ENCODE measurements at regions of chr14 and their contacts with region 1.

Region 1: GRCh38 chr14:22570132-22570949 is 18.7 kb downstream of the DAD1 start:
- DNase-seq: peak in 8 of 9 donors; percentile 72 to 98 (median 96)
- ATAC-seq: peak; percentile 98
- H3K4me3 ChIP-seq: peak overlapping the region; percentile 53
- H3K4me3 Mint-ChIP-seq: peak overlapping the region; percentile 68 to 95 (median 80)
- H3K27ac ChIP-seq: peak overlapping the region; percentile 87
- H3K27ac Mint-ChIP-seq: peak overlapping the region; percentile 77 to 99 (median 96)
- H3K4me1 ChIP-seq: peaks cover 49 to 51% of the 10 kb centered on the region in 2 donors
- H3K4me1 Mint-ChIP-seq: peaks cover 28 to 72% (median 68%) of the 10 kb centered on the region in 7 donors
- H3K27me3 ChIP-seq: no peaks in the 10 kb centered on the region
- H3K27me3 Mint-ChIP-seq: no peaks in the 10 kb centered on the region

Region 2: GRCh38 chr14:21868442-21869046 is 701.8 kb before region 1 on chr14:
- CTCF ChIA-PET with region 1: interaction called, 12 read pairs
- POLR2A ChIA-PET with region 1: interaction called, 6 read pairs
- intact Hi-C with region 1: loop called in 1 of 2 experiments (anchors 1 kb)
- DNase-seq: peak; percentile 33 to 79 (median 70)
- ATAC-seq: peak; percentile 97
- H3K4me3 ChIP-seq: peak overlapping the region; percentile 16
- H3K4me3 Mint-ChIP-seq: peak overlapping the region; percentile 18 to 85 (median 74)
- H3K27ac ChIP-seq: peak overlapping the region; percentile 25
- H3K27ac Mint-ChIP-seq: peak overlapping the region; percentile 8 to 88 (median 59)
- H3K4me1 ChIP-seq: peaks cover 4 to 8% of the 10 kb centered on the region in 2 donors
- H3K4me1 Mint-ChIP-seq: peaks cover 3 to 54% (median 25%) of the 10 kb centered on the region in 7 donors
- H3K27me3 ChIP-seq: peaks cover 0 to 3% of the 10 kb centered on the region in 2 donors
- H3K27me3 Mint-ChIP-seq: peaks cover 0 to 6% (median 0%) of the 10 kb centered on the region in 5 donors

Region 3: DNA sequence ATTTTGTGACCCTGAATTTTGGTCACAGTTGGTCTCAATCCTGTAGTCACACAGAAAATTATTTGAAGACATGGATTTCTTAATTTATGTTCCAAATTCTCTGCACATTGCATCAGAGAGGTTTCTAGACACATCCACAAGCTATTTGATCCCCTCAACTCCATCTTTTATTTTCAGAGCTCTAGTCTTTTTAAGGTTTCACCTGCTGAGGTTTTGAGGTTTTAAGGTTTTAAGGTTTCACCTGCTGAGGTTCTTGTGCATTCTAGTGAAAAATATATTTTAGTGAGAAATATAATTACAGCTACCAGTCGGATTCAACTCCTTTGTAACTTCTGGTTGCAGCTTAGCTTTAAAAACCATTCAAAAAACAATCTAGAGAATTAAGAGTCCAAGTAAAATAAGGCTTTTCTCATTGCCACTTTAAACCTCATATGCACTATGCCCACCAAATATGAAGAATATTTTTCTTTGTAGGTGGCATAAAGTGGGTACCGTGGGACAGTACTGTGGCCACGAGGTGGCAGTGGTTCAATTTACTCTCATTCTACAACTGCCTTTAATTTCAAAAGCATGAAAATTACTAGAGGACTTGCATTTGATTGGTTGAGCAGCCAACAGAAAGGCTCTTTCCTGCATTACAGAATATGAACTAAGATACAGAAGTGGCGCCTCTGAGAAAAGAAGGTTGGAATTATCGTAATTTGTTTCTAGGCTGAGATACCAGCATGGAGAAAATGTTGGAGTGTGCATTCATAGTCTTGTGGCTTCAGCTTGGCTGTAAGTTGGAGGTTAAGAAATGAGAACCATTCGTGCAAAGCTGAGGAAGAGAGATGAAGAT is 530.2 kb before region 1 on chr14:
- CTCF ChIA-PET with region 1: interaction called, 6 read pairs
- POLR2A ChIA-PET with region 1: interaction called, 4 read pairs
- intact Hi-C with region 1: loop called in 1 of 2 experiments (anchors 1 kb)
- DNase-seq: peak in 7 of 9 donors; percentile 46 to 70 (median 59)
- ATAC-seq: peak; percentile 93
- H3K4me3 ChIP-seq: peak overlapping the region; percentile 40
- H3K4me3 Mint-ChIP-seq: peak overlapping the region; percentile 79 to 91 (median 83)
- H3K27ac ChIP-seq: peak overlapping the region; percentile 64
- H3K27ac Mint-ChIP-seq: peak overlapping the region; percentile 80 to 92 (median 88)
- H3K4me1 ChIP-seq: no peaks in the 10 kb centered on the region
- H3K4me1 Mint-ChIP-seq: peaks cover 2 to 34% (median 12%) of the 10 kb centered on the region in 7 donors
- H3K27me3 ChIP-seq: no peaks in the 10 kb centered on the region
- H3K27me3 Mint-ChIP-seq: peaks cover 0 to 8% (median 0%) of the 10 kb centered on the region in 5 donors

Region 4: DNA sequence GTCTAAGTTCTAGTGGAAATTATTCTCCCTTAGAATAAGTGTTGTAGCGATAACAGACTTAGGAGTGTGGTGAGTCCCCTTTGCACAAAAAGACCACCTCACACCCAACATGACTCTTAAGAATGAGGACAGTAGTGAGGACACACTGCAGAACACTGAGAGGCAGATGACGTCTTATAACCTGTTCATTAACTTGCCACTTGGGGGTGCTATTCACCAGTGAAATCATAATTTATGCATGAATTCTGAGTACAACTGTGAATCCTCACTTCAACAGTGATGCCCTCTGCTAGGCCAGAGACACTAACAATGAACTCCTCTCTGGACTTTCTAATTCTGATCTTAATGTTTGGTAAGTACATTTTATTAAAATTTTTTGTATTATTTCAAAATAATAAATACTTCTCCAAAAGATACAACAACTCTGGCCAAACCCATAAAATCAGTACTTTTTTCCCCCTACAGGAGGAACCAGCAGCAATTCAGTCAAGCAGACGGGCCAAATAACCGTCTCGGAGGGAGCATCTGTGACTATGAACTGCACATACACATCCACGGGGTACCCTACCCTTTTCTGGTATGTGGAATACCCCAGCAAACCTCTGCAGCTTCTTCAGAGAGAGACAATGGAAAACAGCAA is 256.0 kb before region 1 on chr14:
- CTCF ChIA-PET with region 1: no interaction called
- POLR2A ChIA-PET with region 1: interaction called, 3 read pairs
- intact Hi-C with region 1: loop called in 1 of 2 experiments (anchors 5 kb)
- DNase-seq: peak in 3 of 9 donors; percentile 4 to 32 (median 19)
- ATAC-seq: peak; percentile 76
- H3K4me3 ChIP-seq: no peak overlapping the region
- H3K4me3 Mint-ChIP-seq: peak overlapping the region in 7 of 10 donors; percentile 42 to 83 (median 60)
- H3K27ac ChIP-seq: no peak overlapping the region
- H3K27ac Mint-ChIP-seq: peak overlapping the region in 5 of 9 donors; percentile 59 to 80 (median 73)
- H3K4me1 ChIP-seq: no peaks in the 10 kb centered on the region
- H3K4me1 Mint-ChIP-seq: peaks cover 0 to 4% (median 0%) of the 10 kb centered on the region in 7 donors
- H3K27me3 ChIP-seq: no peaks in the 10 kb centered on the region
- H3K27me3 Mint-ChIP-seq: no peaks in the 10 kb centered on the region

Region 5: GRCh38 chr14:22598099-22598899 is 28.0 kb after region 1 on chr14 and contains the start of gene ABHD4:
- CTCF ChIA-PET with region 1: interaction called, 15 read pairs
- POLR2A ChIA-PET with region 1: interaction called, 5 read pairs
- intact Hi-C with region 1: no loop called
- DNase-seq: peak; percentile 31 to 79 (median 43)
- ATAC-seq: peak; percentile 93
- H3K4me3 ChIP-seq: peak within 1 kb of the TSS; percentile 88
- H3K4me3 Mint-ChIP-seq: peak within 1 kb of the TSS; percentile 89 to 99 (median 96)
- H3K27ac ChIP-seq: peak within 1 kb of the TSS; percentile 74
- H3K27ac Mint-ChIP-seq: peak within 1 kb of the TSS; percentile 76 to 96 (median 91)
- H3K4me1 ChIP-seq: peaks cover 10 to 15% of the 10 kb centered on the region in 2 donors
- H3K4me1 Mint-ChIP-seq: peaks cover 23 to 44% (median 35%) of the 10 kb centered on the region in 7 donors
- H3K27me3 ChIP-seq: no peaks in the 10 kb centered on the region
- H3K27me3 Mint-ChIP-seq: peaks cover 0 to 12% (median 0%) of the 10 kb centered on the region in 5 donors
- total RNA-seq, gene ABHD4: 10.5 to 16.3 (median 14.7) TPM

Region 6: DNA sequence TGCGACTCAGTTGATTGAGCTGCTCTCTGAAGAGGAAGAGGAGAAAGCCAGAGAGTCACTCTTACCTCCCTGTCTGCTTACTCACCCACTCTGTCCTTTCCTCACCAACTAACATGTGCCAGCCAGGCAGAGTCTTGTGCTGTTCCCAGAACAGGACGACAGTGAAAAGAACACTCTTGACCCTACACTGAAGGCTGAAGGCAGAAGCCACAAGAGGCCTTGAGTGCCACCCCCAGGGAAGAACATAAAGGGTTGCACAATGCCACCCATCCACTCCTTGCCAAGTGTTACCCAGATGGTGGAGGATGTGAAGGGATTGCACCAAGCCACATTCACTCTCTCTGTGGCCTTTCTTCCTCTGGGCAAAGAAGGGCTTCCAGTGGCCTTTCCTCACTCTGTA is 40.6 kb after region 1 on chr14:
- CTCF ChIA-PET with region 1: no interaction called
- POLR2A ChIA-PET with region 1: no interaction called
- intact Hi-C with region 1: no loop called
- DNase-seq: no peak
- ATAC-seq: no peak
- H3K4me3 ChIP-seq: no peak overlapping the region
- H3K4me3 Mint-ChIP-seq: no peak overlapping the region
- H3K27ac ChIP-seq: no peak overlapping the region
- H3K27ac Mint-ChIP-seq: peak overlapping the region in 1 of 9 donors; percentile 55
- H3K4me1 ChIP-seq: no peaks in the 10 kb centered on the region
- H3K4me1 Mint-ChIP-seq: peaks cover 0 to 4% (median 0%) of the 10 kb centered on the region in 7 donors
- H3K27me3 ChIP-seq: no peaks in the 10 kb centered on the region
- H3K27me3 Mint-ChIP-seq: no peaks in the 10 kb centered on the region

Region 7: GRCh38 chr14:22872033-22872832 is 301.9 kb after region 1 on chr14:
- CTCF ChIA-PET with region 1: interaction called, 4 read pairs
- POLR2A ChIA-PET with region 1: interaction called, 4 read pairs
- intact Hi-C with region 1: loop called in 1 of 2 experiments (anchors 1 kb)
- DNase-seq: peak; percentile 55 to 76 (median 69)
- ATAC-seq: peak; percentile 57
- H3K4me3 ChIP-seq: peak overlapping the region; percentile 72
- H3K4me3 Mint-ChIP-seq: peak overlapping the region; percentile 87 to 98 (median 95)
- H3K27ac ChIP-seq: peak overlapping the region; percentile 86
- H3K27ac Mint-ChIP-seq: peak overlapping the region; percentile 83 to 98 (median 94)
- H3K4me1 ChIP-seq: peaks cover 20 to 33% of the 10 kb centered on the region in 2 donors
- H3K4me1 Mint-ChIP-seq: peaks cover 26 to 49% (median 29%) of the 10 kb centered on the region in 7 donors
- H3K27me3 ChIP-seq: no peaks in the 10 kb centered on the region
- H3K27me3 Mint-ChIP-seq: no peaks in the 10 kb centered on the region

Measured in naive thymus-derived CD4-positive, alpha-beta T cell (primary cell).